Naive thymus-derived CD4-positive, alpha-beta T cell (primary cell): ENCODE measurements at regions of chr14 and their contacts with region 1.

Region 1: GRCh38 chr14:75542588-75543091 is 20.4 kb downstream of the BATF start:
- DNase-seq: peak; percentile 42 to 85 (median 65)
- ATAC-seq: peak; percentile 95
- H3K4me3 ChIP-seq: peak overlapping the region; percentile 48
- H3K4me3 Mint-ChIP-seq: peak overlapping the region; percentile 75 to 89 (median 80)
- H3K27ac ChIP-seq: peak overlapping the region; percentile 90
- H3K27ac Mint-ChIP-seq: peak overlapping the region; percentile 94 to 97 (median 96)
- H3K4me1 ChIP-seq: peaks cover 30 to 43% of the 10 kb centered on the region in 2 donors
- H3K4me1 Mint-ChIP-seq: peaks cover 27 to 68% (median 59%) of the 10 kb centered on the region in 7 donors
- H3K27me3 ChIP-seq: no peaks in the 10 kb centered on the region
- H3K27me3 Mint-ChIP-seq: no peaks in the 10 kb centered on the region

Region 2: GRCh38 chr14:75497191-75497590 is 45.4 kb before region 1 on chr14:
- CTCF ChIA-PET with region 1: no interaction called
- POLR2A ChIA-PET with region 1: no interaction called
- intact Hi-C with region 1: loop called in 1 of 2 experiments (anchors 2 kb)
- DNase-seq: peak in 1 of 9 donors; percentile 62
- ATAC-seq: peak; percentile 65
- H3K4me3 ChIP-seq: no peak overlapping the region
- H3K4me3 Mint-ChIP-seq: peak overlapping the region in 1 of 10 donors; percentile 72
- H3K27ac ChIP-seq: no peak overlapping the region
- H3K27ac Mint-ChIP-seq: peak overlapping the region in 2 of 9 donors; percentile 41 to 89
- H3K4me1 ChIP-seq: peaks cover 0 to 3% of the 10 kb centered on the region in 2 donors
- H3K4me1 Mint-ChIP-seq: peaks cover 0 to 49% (median 0%) of the 10 kb centered on the region in 7 donors
- H3K27me3 ChIP-seq: no peaks in the 10 kb centered on the region
- H3K27me3 Mint-ChIP-seq: no peaks in the 10 kb centered on the region

Region 3: GRCh38 chr14:75560962-75561432 is 18.4 kb after region 1 on chr14:
- CTCF ChIA-PET with region 1: interaction called, 6 read pairs
- POLR2A ChIA-PET with region 1: interaction called, 3 read pairs
- intact Hi-C with region 1: loop called (anchors 1 kb)
- DNase-seq: peak in 4 of 9 donors; percentile 19 to 54 (median 28)
- ATAC-seq: peak; percentile 82
- H3K4me3 ChIP-seq: no peak overlapping the region
- H3K4me3 Mint-ChIP-seq: peak overlapping the region in 7 of 10 donors; percentile 18 to 77 (median 40)
- H3K27ac ChIP-seq: no peak overlapping the region
- H3K27ac Mint-ChIP-seq: peak overlapping the region in 6 of 9 donors; percentile 12 to 68 (median 48)
- H3K4me1 ChIP-seq: peaks cover 4 to 8% of the 10 kb centered on the region in 2 donors
- H3K4me1 Mint-ChIP-seq: peaks cover 17 to 62% (median 39%) of the 10 kb centered on the region in 7 donors
- H3K27me3 ChIP-seq: no peaks in the 10 kb centered on the region
- H3K27me3 Mint-ChIP-seq: no peaks in the 10 kb centered on the region

Region 4: DNA sequence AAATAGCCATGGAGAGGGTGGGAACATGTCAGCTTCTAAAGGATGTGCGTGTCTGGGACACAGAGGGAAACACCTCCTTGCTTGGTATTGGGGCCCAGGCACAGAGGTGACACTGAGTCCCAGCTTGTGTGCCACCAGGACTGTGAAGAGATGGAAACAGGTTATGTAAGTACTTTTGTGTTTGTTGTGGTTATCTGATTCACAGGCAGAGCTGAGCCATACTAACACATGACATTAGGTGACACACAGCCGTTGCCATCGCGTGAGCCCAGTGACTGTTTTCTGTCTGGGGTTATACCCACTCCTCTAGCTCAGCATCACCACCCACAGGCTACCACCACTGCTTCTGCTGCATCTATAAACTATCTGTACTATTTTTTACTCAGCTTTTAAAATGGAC is 23.7 kb after region 1 on chr14:
- CTCF ChIA-PET with region 1: interaction called, 6 read pairs
- POLR2A ChIA-PET with region 1: no interaction called
- intact Hi-C with region 1: loop called (anchors 1 kb)
- DNase-seq: peak in 7 of 9 donors; percentile 41 to 78 (median 63)
- ATAC-seq: peak; percentile 91
- H3K4me3 ChIP-seq: no peak overlapping the region
- H3K4me3 Mint-ChIP-seq: peak overlapping the region in 7 of 10 donors; percentile 7 to 61 (median 45)
- H3K27ac ChIP-seq: peak overlapping the region; percentile 22
- H3K27ac Mint-ChIP-seq: peak overlapping the region; percentile 69 to 96 (median 87)
- H3K4me1 ChIP-seq: peaks cover 3 to 6% of the 10 kb centered on the region in 2 donors
- H3K4me1 Mint-ChIP-seq: peaks cover 13 to 53% (median 34%) of the 10 kb centered on the region in 7 donors
- H3K27me3 ChIP-seq: no peaks in the 10 kb centered on the region
- H3K27me3 Mint-ChIP-seq: no peaks in the 10 kb centered on the region

Region 5: DNA sequence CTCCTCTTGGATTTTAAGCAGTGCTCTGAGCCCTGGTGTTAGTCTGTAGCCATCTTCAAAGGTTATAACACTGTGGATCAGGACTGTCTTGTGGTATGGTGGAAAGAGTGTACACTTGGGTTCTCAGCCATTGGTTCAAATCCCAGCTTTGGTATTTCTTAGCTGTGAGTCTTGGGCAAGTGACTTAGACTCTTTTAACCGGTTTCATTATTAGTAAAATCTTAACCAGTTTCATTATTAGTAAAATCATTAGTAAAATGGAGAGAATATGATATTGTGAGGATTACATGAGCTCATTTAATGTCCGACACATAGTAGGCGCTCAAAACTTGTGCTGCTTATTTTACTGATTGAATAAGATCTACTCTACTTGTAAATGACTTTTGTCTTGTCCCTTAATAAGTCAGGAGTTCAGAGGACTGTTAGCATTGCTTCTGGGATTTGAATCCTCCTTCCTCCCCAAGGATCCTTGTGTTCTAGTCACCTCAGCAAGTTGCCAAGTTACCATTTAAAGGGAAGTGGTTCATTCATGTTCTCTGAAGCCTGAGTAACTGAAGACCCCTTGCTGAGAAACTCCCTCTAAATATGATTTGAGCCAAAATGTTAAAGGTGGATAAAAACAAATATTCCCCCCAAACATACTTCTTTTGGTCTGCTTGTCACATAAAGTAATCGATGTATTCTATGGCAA is 130.8 kb after region 1 on chr14:
- CTCF ChIA-PET with region 1: no interaction called
- POLR2A ChIA-PET with region 1: no interaction called
- intact Hi-C with region 1: no loop called
- DNase-seq: no peak
- ATAC-seq: no peak
- H3K4me3 ChIP-seq: no peak overlapping the region
- H3K4me3 Mint-ChIP-seq: peak overlapping the region in 2 of 10 donors; percentile 26 to 48
- H3K27ac ChIP-seq: no peak overlapping the region
- H3K27ac Mint-ChIP-seq: no peak overlapping the region
- H3K4me1 ChIP-seq: no peaks in the 10 kb centered on the region
- H3K4me1 Mint-ChIP-seq: peaks cover 0 to 5% (median 0%) of the 10 kb centered on the region in 7 donors
- H3K27me3 ChIP-seq: no peaks in the 10 kb centered on the region
- H3K27me3 Mint-ChIP-seq: no peaks in the 10 kb centered on the region